ENCODE measurements at regions of chr7 and their contacts with region 1.

Region 1: DNA sequence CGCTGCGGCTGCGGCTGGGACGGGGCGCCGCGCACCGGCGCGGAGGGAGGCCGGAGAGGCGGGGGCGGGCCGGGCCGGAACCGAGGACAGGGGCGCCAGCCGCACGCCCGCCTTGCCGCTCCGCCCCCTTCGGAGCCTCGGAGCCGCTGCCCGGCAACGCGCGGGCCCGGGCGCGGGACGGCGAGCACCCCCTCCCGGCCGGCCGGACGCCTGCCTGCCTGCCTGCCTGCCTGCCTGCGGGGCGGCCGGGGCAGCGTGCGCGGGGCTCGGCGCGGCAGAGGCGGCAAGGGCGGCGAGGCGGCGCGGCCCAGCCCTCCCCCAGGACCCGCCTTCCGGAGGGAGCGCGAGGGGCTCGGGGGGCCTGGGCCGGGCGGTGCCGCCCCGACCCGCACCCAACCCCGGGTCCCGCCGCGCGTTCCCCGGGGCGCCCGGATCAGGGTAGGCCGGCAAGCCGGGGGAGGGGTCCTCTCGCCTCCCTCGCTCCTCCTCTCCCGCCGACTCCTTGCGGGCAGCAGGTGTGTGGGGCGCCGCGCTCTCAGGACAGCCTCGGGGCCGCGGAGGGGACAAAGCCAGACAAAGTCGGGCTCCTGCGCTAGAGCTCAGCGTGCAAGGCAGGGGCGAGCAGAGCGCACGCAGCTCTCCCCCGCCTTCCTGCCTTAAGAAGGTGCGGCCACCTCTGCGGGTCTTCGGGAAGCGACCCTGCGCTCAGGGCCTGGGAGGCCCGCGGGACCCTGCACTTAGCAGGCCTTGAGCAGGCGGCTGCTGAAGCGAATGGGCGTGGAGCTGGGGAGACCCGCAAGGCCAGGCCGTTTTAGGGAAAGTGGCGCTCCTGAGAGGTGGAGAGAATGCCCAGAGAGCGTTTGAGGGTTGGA is at the start of gene KIAA1549:
- DNase-seq: peak; percentile 62
- H3K4me3 ChIP-seq: peak within 1 kb of the TSS; percentile 59 to 93 (median 72)
- H3K27ac ChIP-seq: no peak within 1 kb of the TSS
- H3K4me1 ChIP-seq: peaks cover 24% of the 10 kb centered on the region
- H3K27me3 ChIP-seq: no peaks in the 10 kb centered on the region
- CTCF ChIP-seq: peak; percentile 6 to 21
- POLR2A ChIP-seq: no peak
- total RNA-seq, gene KIAA1549: 10.9 and 12.4 TPM in 2 replicates

Region 2: DNA sequence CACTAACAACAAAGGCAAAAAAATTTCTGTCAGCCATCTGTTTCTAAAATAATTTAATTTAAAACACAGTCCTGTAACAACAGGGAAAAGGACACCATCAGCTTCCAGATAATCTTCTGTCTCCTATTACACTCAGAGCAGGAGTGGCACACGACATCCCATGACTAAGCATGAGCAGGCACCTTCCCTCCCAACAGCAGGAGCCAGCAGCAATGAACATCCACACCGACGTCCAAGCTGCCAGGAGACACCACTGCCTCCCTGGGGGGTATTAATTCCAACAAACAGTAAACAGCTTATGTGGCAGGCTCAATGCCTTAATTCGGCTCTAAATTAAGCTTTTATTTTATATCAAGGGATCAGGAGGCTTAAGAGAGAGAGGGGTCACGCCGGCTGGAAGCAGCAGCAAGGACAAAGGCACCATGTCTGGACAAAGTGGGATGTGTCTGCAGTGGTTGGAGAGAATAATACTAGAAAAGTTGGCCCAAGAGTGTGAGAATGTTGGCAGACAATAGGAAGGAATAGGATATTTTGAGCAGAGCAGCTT is 46.0 kb before region 1 on chr7:
- CTCF ChIA-PET with region 1: interaction called, 17 read pairs
- POLR2A ChIA-PET with region 1: no interaction called
- dilution Hi-C with region 1: no loop called
- intact Hi-C with region 1: loop called (anchors 1 kb)
- DNase-seq: peak; percentile 77
- H3K4me3 ChIP-seq: peak overlapping the region in 1 of 3 experiments; percentile 24
- H3K27ac ChIP-seq: peak overlapping the region; percentile 88
- H3K4me1 ChIP-seq: peaks cover 37% of the 10 kb centered on the region
- H3K27me3 ChIP-seq: no peaks in the 10 kb centered on the region
- CTCF ChIP-seq: no peak
- POLR2A ChIP-seq: no peak